ENCODE measurements at regions of chr4 and their contacts with region 1.

Region 1: GRCh38 chr4:46931981-46932380 is 22.9 kb upstream of the COX7B2 start:
- DNase-seq: peak in 1 of 2 experiments; percentile 30
- H3K4me3 ChIP-seq: no peak overlapping the region
- H3K4me3 Mint-ChIP-seq: no peak overlapping the region
- H3K27ac Mint-ChIP-seq: no peak overlapping the region
- H3K4me1 ChIP-seq: peaks cover 41% of the 10 kb centered on the region
- H3K4me1 Mint-ChIP-seq: peaks cover 15% of the 10 kb centered on the region
- H3K27me3 ChIP-seq: no peaks in the 10 kb centered on the region
- H3K27me3 Mint-ChIP-seq: no peaks in the 10 kb centered on the region
- CTCF ChIP-seq: peak; percentile 13 to 35

Region 2: GRCh38 chr4:46844325-46844917 is 87.6 kb before region 1 on chr4:
- CTCF ChIA-PET with region 1: no interaction called
- POLR2A ChIA-PET with region 1: no interaction called
- intact Hi-C with region 1: loop called (anchors 2 kb)
- DNase-seq: peak; percentile 66 to 76
- H3K4me3 ChIP-seq: no peak overlapping the region
- H3K4me3 Mint-ChIP-seq: no peak overlapping the region
- H3K27ac Mint-ChIP-seq: no peak overlapping the region
- H3K4me1 ChIP-seq: peaks cover 24% of the 10 kb centered on the region
- H3K4me1 Mint-ChIP-seq: peaks cover 16% of the 10 kb centered on the region
- H3K27me3 ChIP-seq: no peaks in the 10 kb centered on the region
- H3K27me3 Mint-ChIP-seq: no peaks in the 10 kb centered on the region
- CTCF ChIP-seq: peak; percentile 52 to 74

Region 3: GRCh38 chr4:46870411-46870810 is 61.6 kb before region 1 on chr4:
- CTCF ChIA-PET with region 1: no interaction called
- POLR2A ChIA-PET with region 1: no interaction called
- intact Hi-C with region 1: loop called (anchors 2 kb)
- DNase-seq: no peak
- H3K4me3 ChIP-seq: no peak overlapping the region
- H3K4me3 Mint-ChIP-seq: no peak overlapping the region
- H3K27ac Mint-ChIP-seq: no peak overlapping the region
- H3K4me1 ChIP-seq: peaks cover 20% of the 10 kb centered on the region
- H3K4me1 Mint-ChIP-seq: peaks cover 25% of the 10 kb centered on the region
- H3K27me3 ChIP-seq: no peaks in the 10 kb centered on the region
- H3K27me3 Mint-ChIP-seq: no peaks in the 10 kb centered on the region
- CTCF ChIP-seq: no peak

Region 4: DNA sequence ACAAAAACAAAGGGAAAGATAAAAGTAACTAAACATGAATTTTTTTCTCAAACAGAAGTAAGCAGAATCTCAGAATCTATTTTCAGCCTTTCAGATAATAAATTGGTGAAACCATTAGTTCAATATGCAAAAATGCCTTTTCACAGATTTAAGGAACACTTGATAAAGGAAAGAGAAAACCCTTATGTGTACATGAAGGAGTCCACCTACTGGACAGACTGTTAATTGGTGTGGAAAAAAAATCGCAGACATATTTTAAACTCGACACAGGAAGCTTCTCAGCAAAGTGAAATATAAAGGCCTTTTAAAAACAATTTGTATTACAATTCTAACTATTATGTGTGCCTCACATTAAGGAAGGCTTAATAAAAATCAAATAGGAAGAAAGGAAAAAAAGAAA is 45.3 kb before region 1 on chr4:
- CTCF ChIA-PET with region 1: no interaction called
- POLR2A ChIA-PET with region 1: no interaction called
- intact Hi-C with region 1: loop called (anchors 1 kb)
- DNase-seq: peak in 1 of 2 experiments; percentile 32
- H3K4me3 ChIP-seq: no peak overlapping the region
- H3K4me3 Mint-ChIP-seq: no peak overlapping the region
- H3K27ac Mint-ChIP-seq: peak overlapping the region; percentile 72
- H3K4me1 ChIP-seq: peaks cover 49% of the 10 kb centered on the region
- H3K4me1 Mint-ChIP-seq: peaks cover 29% of the 10 kb centered on the region
- H3K27me3 ChIP-seq: no peaks in the 10 kb centered on the region
- H3K27me3 Mint-ChIP-seq: no peaks in the 10 kb centered on the region
- CTCF ChIP-seq: peak; percentile 29 to 32

Region 5: DNA sequence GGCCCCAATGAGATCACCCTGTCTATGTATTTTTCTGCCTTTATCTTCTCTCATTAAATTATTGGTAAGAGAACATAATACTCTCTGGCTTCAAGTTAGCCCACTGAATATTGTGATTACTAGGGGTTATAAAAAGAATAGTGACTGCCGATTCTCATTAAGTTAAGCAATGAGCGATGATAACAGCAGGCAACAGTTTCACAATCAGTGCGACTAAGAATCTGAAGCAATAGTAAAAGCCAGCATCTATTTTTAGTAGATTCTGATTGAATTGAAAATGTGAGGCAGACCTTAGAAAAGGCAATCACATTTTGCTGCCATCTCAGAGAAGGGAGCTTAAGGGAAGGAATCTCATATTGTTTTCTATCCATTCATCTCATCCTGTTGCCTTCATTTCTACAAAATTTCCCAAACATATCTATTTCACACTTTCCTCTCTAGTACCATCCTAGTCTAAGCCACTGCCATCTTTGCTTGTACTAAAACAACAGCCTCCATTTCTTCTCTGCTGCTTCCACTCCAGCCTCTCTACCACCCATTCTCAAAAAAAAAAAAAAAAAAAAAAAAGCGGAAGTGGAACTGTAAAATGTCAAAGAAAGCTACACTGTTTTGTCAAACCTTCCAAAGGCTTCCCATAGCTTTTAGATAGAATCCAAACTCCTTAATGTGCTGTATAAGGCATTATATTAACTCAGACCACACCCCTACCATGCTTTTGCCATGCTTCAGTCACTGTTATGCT is 44.0 kb after region 1 on chr4:
- CTCF ChIA-PET with region 1: no interaction called
- POLR2A ChIA-PET with region 1: no interaction called
- intact Hi-C with region 1: no loop called
- DNase-seq: no peak
- H3K4me3 ChIP-seq: no peak overlapping the region
- H3K4me3 Mint-ChIP-seq: no peak overlapping the region
- H3K27ac Mint-ChIP-seq: no peak overlapping the region
- H3K4me1 ChIP-seq: no peaks in the 10 kb centered on the region
- H3K4me1 Mint-ChIP-seq: no peaks in the 10 kb centered on the region
- H3K27me3 ChIP-seq: no peaks in the 10 kb centered on the region
- H3K27me3 Mint-ChIP-seq: peaks cover 3% of the 10 kb centered on the region
- CTCF ChIP-seq: no peak

Region 6: DNA sequence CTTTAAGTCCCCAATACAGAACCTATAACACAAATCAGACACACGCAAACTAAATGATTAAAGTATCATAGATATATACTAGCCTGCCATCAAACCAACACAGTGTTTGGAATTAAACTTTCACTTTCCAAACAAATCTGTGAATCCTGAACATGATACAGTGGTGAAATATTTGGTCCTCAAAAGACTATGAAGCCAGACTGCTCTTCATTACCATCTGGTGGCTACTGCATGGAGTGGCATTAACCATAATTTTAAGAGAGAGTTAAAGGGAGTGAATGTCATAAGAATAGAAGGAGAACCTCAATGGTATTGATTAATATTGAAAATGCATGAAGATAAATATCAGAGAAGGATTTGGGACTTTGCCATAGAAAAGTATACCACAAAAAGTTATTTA is 70.6 kb after region 1 on chr4:
- CTCF ChIA-PET with region 1: no interaction called
- POLR2A ChIA-PET with region 1: no interaction called
- intact Hi-C with region 1: loop called (anchors 1 kb)
- DNase-seq: peak in 1 of 2 experiments; percentile 7
- H3K4me3 ChIP-seq: no peak overlapping the region
- H3K4me3 Mint-ChIP-seq: no peak overlapping the region
- H3K27ac Mint-ChIP-seq: no peak overlapping the region
- H3K4me1 ChIP-seq: peaks cover 4% of the 10 kb centered on the region; the same call in 1 of the 2 replicates
- H3K4me1 Mint-ChIP-seq: peaks cover 4% of the 10 kb centered on the region
- H3K27me3 ChIP-seq: no peaks in the 10 kb centered on the region
- H3K27me3 Mint-ChIP-seq: no peaks in the 10 kb centered on the region
- CTCF ChIP-seq: peak; percentile 42 to 53

Region 7: GRCh38 chr4:47122592-47123291 is 190.8 kb after region 1 on chr4:
- CTCF ChIA-PET with region 1: interaction called, 3 read pairs
- POLR2A ChIA-PET with region 1: no interaction called
- intact Hi-C with region 1: loop called (anchors 5 kb)
- DNase-seq: peak; percentile 69 to 80
- H3K4me3 ChIP-seq: no peak overlapping the region
- H3K4me3 Mint-ChIP-seq: no peak overlapping the region
- H3K27ac Mint-ChIP-seq: no peak overlapping the region
- H3K4me1 ChIP-seq: no peaks in the 10 kb centered on the region
- H3K4me1 Mint-ChIP-seq: no peaks in the 10 kb centered on the region
- H3K27me3 ChIP-seq: no peaks in the 10 kb centered on the region
- H3K27me3 Mint-ChIP-seq: no peaks in the 10 kb centered on the region
- CTCF ChIP-seq: peak; percentile 70 to 82

Region 8: DNA sequence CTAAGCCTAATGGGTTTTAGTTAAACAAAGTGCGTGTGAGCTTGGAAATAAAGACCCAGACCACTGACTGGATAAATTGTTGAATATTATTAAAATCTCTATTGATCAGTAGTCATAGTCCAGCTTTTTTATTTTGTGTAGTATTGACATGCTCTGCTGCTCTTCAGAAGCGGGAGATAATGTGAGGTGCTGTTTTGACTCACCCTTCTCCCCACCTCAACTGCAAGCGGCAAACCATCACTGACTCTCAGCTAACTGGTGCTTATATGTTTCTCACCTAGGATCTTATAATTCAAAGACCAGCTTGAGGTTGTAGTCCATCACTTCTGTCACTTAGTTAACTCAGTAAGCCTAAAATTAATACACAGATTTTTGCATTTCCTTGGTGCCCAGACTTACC is 459.3 kb after region 1 on chr4:
- CTCF ChIA-PET with region 1: no interaction called
- POLR2A ChIA-PET with region 1: no interaction called
- intact Hi-C with region 1: loop called (anchors 5 kb)
- DNase-seq: no peak
- H3K4me3 ChIP-seq: no peak overlapping the region
- H3K4me3 Mint-ChIP-seq: no peak overlapping the region
- H3K27ac Mint-ChIP-seq: no peak overlapping the region
- H3K4me1 ChIP-seq: no peaks in the 10 kb centered on the region
- H3K4me1 Mint-ChIP-seq: no peaks in the 10 kb centered on the region
- H3K27me3 ChIP-seq: no peaks in the 10 kb centered on the region; the same call in 1 of the 2 replicates
- H3K27me3 Mint-ChIP-seq: no peaks in the 10 kb centered on the region
- CTCF ChIP-seq: no peak

Region 9: DNA sequence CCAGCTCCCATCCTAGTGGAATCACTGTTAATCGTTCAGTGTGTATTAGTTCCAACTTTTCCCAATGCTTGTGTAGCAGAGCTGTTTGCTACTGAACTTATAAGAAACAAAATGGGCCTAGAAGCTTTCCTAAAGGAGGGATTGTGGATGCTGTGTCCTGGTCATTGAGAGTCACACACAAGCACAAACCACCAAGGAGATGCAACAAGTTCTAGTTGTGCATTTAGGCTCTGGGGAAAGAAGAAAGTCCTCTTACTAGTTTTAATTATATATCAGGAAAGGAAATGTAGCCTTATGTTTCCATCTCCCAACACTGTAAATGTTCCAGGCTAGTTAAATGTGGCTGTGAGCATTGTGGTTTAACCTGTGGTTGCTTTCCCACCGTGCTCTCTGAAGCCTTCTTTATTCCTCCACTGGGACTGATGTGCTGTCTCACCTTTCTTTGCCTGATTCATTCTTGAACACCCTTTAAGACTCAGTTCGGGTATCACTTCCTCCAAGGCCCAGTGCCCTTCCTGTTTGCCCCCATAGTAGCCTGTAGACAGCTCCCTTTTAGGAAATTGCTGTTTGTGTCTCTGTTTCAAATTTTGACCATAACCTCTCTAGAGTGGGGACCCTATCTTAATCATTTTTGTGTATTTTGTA is 587.4 kb after region 1 on chr4:
- CTCF ChIA-PET with region 1: no interaction called
- POLR2A ChIA-PET with region 1: no interaction called
- intact Hi-C with region 1: no loop called
- DNase-seq: no peak
- H3K4me3 ChIP-seq: no peak overlapping the region
- H3K4me3 Mint-ChIP-seq: no peak overlapping the region
- H3K27ac Mint-ChIP-seq: no peak overlapping the region
- H3K4me1 ChIP-seq: no peaks in the 10 kb centered on the region
- H3K4me1 Mint-ChIP-seq: no peaks in the 10 kb centered on the region
- H3K27me3 ChIP-seq: no peaks in the 10 kb centered on the region
- H3K27me3 Mint-ChIP-seq: no peaks in the 10 kb centered on the region
- CTCF ChIP-seq: no peak